ENCODE measurements at regions of chr4 and their contacts with region 1.

Region 1: GRCh38 chr4:97786306-97786913 is 356.9 kb downstream of the STPG2 start:
- DNase-seq: no peak
- H3K4me3 Mint-ChIP-seq: no peak overlapping the region
- H3K27ac Mint-ChIP-seq: no peak overlapping the region
- H3K4me1 Mint-ChIP-seq: no peaks in the 10 kb centered on the region
- H3K27me3 Mint-ChIP-seq: no peaks in the 10 kb centered on the region
- CTCF ChIP-seq: no peak

Region 2: DNA sequence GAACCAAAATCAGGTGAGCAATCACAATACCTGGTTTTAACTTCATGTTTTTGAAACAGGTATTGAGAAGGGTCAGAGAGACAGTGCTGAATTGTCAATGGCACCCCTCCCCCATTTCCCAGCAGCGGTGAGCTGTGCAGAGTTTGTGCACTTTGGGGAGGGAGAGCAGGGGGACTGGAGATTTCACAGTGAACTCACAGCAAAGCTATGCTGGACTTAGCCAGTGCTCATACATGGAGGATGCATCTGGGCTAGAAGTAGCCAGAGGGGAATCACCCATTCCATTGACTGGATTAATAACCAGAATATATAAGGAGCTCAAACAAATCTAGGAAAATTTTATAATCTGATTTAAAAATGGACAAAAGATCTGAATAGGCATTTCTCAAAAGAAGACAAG is 255.7 kb before region 1 on chr4:
- CTCF ChIA-PET with region 1: no interaction called
- POLR2A ChIA-PET with region 1: no interaction called
- intact Hi-C with region 1: no loop called
- DNase-seq: no peak
- H3K4me3 Mint-ChIP-seq: no peak overlapping the region
- H3K27ac Mint-ChIP-seq: no peak overlapping the region
- H3K4me1 Mint-ChIP-seq: no peaks in the 10 kb centered on the region
- H3K27me3 Mint-ChIP-seq: no peaks in the 10 kb centered on the region
- CTCF ChIP-seq: no peak

Region 3: DNA sequence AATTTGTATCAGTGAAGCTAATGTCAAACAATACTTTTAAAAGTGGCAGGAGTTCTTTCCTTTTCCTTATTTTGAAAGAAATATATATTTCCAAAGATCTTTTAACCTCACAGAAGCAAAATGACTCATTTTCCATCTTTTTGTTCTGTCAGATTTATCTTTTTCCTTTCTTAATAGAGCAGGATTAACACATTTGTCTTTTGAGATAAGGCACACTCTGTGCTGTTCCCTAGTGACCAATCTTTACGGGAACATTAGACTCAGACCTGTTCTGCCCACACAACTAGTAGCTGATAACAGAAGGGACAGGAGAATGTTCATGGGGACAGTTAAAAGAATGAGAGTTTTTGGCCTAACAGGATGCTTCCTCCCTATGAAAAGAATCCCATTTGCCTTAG is 24.3 kb before region 1 on chr4:
- CTCF ChIA-PET with region 1: no interaction called
- POLR2A ChIA-PET with region 1: no interaction called
- intact Hi-C with region 1: loop called (anchors 1 kb)
- DNase-seq: no peak
- H3K4me3 Mint-ChIP-seq: no peak overlapping the region
- H3K27ac Mint-ChIP-seq: no peak overlapping the region
- H3K4me1 Mint-ChIP-seq: no peaks in the 10 kb centered on the region
- H3K27me3 Mint-ChIP-seq: no peaks in the 10 kb centered on the region
- CTCF ChIP-seq: no peak

Region 4: GRCh38 chr4:97923096-97923495 is 136.7 kb after region 1 on chr4:
- CTCF ChIA-PET with region 1: no interaction called
- POLR2A ChIA-PET with region 1: no interaction called
- intact Hi-C with region 1: no loop called
- DNase-seq: no peak
- H3K4me3 Mint-ChIP-seq: no peak overlapping the region
- H3K27ac Mint-ChIP-seq: no peak overlapping the region
- H3K4me1 Mint-ChIP-seq: no peaks in the 10 kb centered on the region
- H3K27me3 Mint-ChIP-seq: no peaks in the 10 kb centered on the region
- CTCF ChIP-seq: no peak